Activated B cell treated with CpG ODN at 0.5 μM for 24 hours (primary cell): ENCODE measurements at regions of chr18 and their contacts with region 1.

Region 1: DNA sequence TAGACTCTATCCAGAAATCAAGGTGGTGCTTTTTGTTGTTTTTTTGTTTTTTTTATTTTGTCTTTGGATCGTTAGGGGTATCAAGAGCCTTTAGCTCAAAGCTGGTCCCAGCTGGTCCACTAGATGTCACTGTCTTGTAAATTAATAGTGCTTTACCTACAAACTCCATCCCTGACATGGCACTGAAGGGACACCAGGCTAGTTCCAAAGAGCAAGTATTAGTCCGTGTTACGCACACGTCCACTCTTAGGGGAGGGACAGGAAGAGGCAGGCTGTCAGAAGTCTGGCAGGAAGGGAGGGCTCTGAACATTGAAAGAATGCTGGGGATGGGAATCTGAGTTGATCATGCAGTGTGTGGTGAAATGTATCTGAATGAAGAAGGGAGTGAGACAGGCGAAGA is 85.9 kb upstream of the CCBE1 start:
- DNase-seq: no peak
- ATAC-seq: no peak
- H3K4me3 Mint-ChIP-seq: no peak overlapping the region
- H3K27ac Mint-ChIP-seq: no peak overlapping the region
- H3K4me1 Mint-ChIP-seq: no peaks in the 10 kb centered on the region
- H3K27me3 Mint-ChIP-seq: peaks cover 5% of the 10 kb centered on the region
- CTCF ChIP-seq: no peak

Region 2: DNA sequence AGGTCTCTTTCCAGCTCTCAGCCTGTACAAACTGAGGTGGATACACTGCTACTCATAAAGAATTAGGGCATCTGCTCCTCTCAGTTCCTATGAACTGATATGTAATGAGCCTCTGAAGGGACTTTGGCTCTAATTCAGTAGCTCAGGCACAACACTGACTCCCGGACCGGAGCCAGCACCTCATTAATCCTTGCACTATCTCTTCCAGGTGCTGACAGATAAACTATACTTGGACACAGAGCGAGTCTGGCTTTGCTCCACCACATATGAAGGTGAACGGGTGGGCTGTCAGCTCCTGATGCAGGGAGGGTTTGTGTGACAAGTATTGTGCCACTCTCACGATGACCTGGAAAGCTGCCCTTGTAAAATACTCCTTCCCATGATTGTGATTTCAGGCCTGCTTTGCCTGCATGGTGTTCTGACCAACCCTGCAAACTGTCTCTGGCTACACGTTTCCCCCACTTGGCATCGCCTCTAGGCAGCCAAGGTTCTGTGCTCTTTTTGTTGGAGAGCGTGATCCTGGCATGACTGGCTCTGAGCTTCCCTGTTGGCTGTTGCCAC is 312.5 kb before region 1 on chr18:
- CTCF ChIA-PET with region 1: no interaction called
- POLR2A ChIA-PET with region 1: no interaction called
- intact Hi-C with region 1: no loop called
- DNase-seq: no peak
- ATAC-seq: no peak
- H3K4me3 Mint-ChIP-seq: no peak overlapping the region
- H3K27ac Mint-ChIP-seq: no peak overlapping the region
- H3K4me1 Mint-ChIP-seq: no peaks in the 10 kb centered on the region
- H3K27me3 Mint-ChIP-seq: peaks cover 14% of the 10 kb centered on the region
- CTCF ChIP-seq: no peak

Region 3: GRCh38 chr18:59988098-59988706 is 205.1 kb after region 1 on chr18:
- CTCF ChIA-PET with region 1: interaction called, 6 read pairs
- POLR2A ChIA-PET with region 1: no interaction called
- intact Hi-C with region 1: loop called (anchors 1 kb)
- DNase-seq: no peak
- ATAC-seq: peak; percentile 64
- H3K4me3 Mint-ChIP-seq: no peak overlapping the region
- H3K27ac Mint-ChIP-seq: no peak overlapping the region
- H3K4me1 Mint-ChIP-seq: no peaks in the 10 kb centered on the region
- H3K27me3 Mint-ChIP-seq: peaks cover 17% of the 10 kb centered on the region
- CTCF ChIP-seq: peak; percentile 100

Region 4: GRCh38 chr18:60110836-60111235 is 327.7 kb after region 1 on chr18:
- CTCF ChIA-PET with region 1: no interaction called
- POLR2A ChIA-PET with region 1: no interaction called
- intact Hi-C with region 1: no loop called
- DNase-seq: no peak
- ATAC-seq: no peak
- H3K4me3 Mint-ChIP-seq: no peak overlapping the region
- H3K27ac Mint-ChIP-seq: no peak overlapping the region
- H3K4me1 Mint-ChIP-seq: no peaks in the 10 kb centered on the region
- H3K27me3 Mint-ChIP-seq: peaks cover 4% of the 10 kb centered on the region
- CTCF ChIP-seq: no peak